AG04450 (cell line): ENCODE measurements at regions of chr16 and their contacts with region 1.

Region 1: GRCh38 chr16:75198135-75198600 is 8.8 kb downstream of the CTRB2 start:
- DNase-seq: peak; percentile 61
- H3K4me3 ChIP-seq: peak overlapping the region; percentile 22
- H3K27ac ChIP-seq: peak overlapping the region; percentile 21
- H3K27me3 ChIP-seq: peaks cover 8% of the 10 kb centered on the region
- CTCF ChIP-seq: no peak

Region 2: DNA sequence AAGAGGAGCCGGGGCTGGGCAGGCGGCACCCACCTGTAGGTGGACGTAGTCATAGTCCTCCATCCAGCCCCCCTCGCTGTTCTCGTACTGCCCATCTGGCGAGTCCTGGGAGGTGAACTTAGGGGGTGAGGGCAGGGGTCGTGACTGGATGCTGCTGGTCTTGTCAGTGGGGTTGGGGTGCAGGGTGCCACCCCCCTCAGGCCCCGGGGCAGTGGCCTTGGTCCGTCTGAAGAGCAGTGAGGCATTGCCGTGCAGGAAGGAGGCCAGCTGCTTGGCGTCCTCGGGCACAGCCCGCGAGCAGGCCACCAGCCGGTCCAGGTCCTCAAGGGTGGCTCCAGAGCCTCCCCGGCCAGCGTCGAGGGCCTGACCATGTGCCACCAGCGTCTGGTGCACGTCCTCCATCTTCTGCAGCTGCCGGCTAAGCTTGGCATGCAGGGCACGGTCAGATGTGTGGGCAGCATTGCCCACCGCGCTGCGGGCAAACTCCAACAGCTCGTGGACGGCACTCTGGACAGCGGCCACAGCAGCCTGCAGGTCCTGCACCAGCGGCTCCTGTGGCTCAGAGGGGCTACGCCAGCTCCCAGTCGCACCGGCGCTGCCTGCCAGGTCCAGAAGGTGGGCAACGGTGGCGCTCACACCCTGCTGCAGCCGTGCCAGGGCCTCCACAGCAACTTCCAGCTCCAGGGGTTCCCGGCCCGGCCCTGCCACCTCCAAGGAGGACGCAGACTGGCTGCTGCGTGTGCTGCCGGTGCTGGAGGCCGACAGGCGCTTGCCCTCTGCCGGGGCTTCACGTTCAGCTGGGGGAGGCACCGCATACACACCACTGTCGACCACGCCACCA is 36.9 kb after region 1 on chr16:
- CTCF ChIA-PET with region 1: interaction called, 15 read pairs
- POLR2A ChIA-PET with region 1: interaction called, 3 read pairs
- DNase-seq: no peak
- H3K4me3 ChIP-seq: no peak overlapping the region
- H3K27ac ChIP-seq: peak overlapping the region; percentile 31
- H3K27me3 ChIP-seq: no peaks in the 10 kb centered on the region
- CTCF ChIP-seq: no peak

Region 3: GRCh38 chr16:75372236-75372856 is 174.2 kb after region 1 on chr16:
- CTCF ChIA-PET with region 1: interaction called, 15 read pairs
- POLR2A ChIA-PET with region 1: no interaction called
- DNase-seq: no peak
- H3K4me3 ChIP-seq: no peak overlapping the region
- H3K27ac ChIP-seq: no peak overlapping the region
- H3K27me3 ChIP-seq: no peaks in the 10 kb centered on the region
- CTCF ChIP-seq: no peak

Region 4: GRCh38 chr16:75385507-75386152 is 187.5 kb after region 1 on chr16:
- CTCF ChIA-PET with region 1: interaction called, 45 read pairs
- POLR2A ChIA-PET with region 1: no interaction called
- DNase-seq: peak; percentile 79
- H3K4me3 ChIP-seq: no peak overlapping the region
- H3K27ac ChIP-seq: no peak overlapping the region
- H3K27me3 ChIP-seq: no peaks in the 10 kb centered on the region
- CTCF ChIP-seq: peak; percentile 57

Region 5: DNA sequence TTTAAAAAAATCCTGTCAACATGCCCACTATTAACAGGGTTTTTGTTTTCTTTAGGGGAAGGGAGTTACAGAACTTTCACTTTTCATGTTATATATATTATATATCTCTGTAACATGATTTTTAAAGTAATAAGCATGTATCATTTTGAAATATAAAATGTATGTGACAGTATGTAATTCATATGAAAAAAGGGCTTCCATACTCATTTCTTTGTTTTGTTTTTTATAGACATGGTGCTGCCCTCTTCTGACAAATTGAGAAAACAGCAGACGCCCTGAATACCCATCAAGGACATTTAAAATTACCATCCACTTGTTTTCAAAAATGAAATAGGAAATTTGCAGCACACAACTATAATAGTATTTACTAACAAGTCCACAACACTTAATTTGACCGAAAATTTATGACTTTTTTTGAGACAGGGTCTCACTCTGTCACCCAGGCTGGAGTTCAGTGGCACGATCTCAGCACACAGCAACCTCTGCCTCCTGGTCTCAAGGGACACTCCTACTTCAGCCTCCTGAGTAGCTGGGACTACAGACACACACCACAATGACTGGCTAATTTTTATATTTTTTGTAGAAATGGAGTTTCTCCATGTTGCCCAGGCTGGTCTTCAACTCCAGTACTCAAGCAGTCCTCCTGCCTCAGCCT is 204.8 kb after region 1 on chr16:
- CTCF ChIA-PET with region 1: interaction called, 139 read pairs
- POLR2A ChIA-PET with region 1: interaction called, 3 read pairs
- DNase-seq: no peak
- H3K4me3 ChIP-seq: no peak overlapping the region
- H3K27ac ChIP-seq: no peak overlapping the region
- H3K27me3 ChIP-seq: no peaks in the 10 kb centered on the region
- CTCF ChIP-seq: peak; percentile 61

Region 6: DNA sequence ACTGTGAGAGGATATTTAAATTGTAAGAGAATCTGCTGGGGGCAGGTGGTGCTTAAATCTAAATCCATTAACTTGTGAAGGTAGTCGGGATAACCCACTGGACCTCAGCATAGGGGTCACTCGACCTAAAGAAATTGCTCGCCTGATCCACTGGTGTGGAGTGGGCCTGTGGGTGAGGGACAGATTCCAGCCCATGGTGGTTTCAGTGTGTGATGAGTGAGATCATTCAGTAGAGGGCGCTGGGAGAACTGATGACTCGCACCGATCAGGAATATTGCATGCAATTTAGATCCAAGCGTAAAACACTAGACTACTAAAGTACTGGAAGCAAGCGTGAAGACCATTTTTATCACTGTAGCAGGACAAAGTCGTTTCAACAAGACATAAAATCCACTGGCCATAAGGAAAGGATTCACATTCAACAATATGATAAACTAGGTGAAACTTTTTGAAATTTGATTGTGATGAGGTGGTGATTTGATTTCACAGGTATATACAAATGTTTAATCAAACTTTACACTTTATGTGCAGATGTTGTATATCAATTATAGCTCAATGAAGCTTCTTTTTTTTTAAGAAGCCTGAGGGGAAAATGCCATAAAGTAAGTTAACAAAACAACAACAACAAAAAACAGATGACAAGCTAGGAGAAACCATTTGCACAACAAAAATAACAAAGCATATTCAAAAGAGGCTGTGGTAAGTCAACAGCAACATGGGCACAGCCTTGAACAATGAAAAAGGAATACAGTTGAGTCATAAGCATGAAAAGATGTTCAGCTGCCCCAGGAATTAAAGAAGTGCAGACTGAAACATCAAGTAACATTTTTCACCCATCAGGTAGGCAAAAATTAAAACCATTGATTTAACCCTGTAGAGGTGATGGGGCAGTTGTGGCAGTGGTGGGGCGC is 273.8 kb after region 1 on chr16:
- CTCF ChIA-PET with region 1: interaction called, 11 read pairs
- POLR2A ChIA-PET with region 1: no interaction called
- DNase-seq: peak; percentile 24
- H3K4me3 ChIP-seq: no peak overlapping the region
- H3K27ac ChIP-seq: no peak overlapping the region
- H3K27me3 ChIP-seq: no peaks in the 10 kb centered on the region
- CTCF ChIP-seq: peak; percentile 78